ENCODE measurements at regions of chr3 and their contacts with region 1.

Region 1: DNA sequence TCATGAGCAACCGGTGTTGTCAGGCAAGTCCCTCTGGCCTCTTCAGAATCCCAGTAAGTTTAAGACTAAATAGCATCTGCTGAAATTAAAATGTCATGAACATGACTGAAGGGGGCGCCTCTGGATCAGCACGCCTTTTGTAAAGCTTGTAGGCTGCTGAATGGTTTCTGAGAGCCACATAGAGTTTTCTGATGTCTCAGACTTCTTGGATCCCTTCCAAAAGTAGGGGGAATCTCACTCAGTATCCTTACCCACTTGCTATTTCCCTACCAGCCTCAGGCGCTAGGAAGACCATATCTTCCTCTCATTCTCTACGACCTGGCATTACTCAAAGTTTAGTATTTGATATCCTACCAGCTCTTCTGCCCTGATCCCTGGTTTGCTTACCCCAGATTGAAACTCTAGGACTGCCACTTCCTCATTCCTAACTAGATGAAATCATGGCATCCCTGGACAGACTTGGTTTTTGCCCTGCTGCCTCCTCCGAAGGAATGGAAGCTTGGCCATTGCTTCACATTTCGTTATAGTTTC is 62.7 kb upstream of the CD47 start:
- DNase-seq: peak; percentile 50 to 51
- H3K4me3 ChIP-seq: no peak overlapping the region
- H3K4me3 Mint-ChIP-seq: no peak overlapping the region
- H3K27ac Mint-ChIP-seq: no peak overlapping the region
- H3K4me1 ChIP-seq: no peaks in the 10 kb centered on the region
- H3K4me1 Mint-ChIP-seq: peaks cover 6% of the 10 kb centered on the region
- H3K27me3 ChIP-seq: no peaks in the 10 kb centered on the region
- H3K27me3 Mint-ChIP-seq: no peaks in the 10 kb centered on the region
- CTCF ChIP-seq: peak; percentile 42 to 46

Region 2: GRCh38 chr3:108322352-108322751 is 168.8 kb after region 1 on chr3:
- CTCF ChIA-PET with region 1: interaction called, 3 read pairs
- POLR2A ChIA-PET with region 1: no interaction called
- intact Hi-C with region 1: loop called (anchors 1 kb)
- DNase-seq: no peak
- H3K4me3 ChIP-seq: no peak overlapping the region
- H3K4me3 Mint-ChIP-seq: no peak overlapping the region
- H3K27ac Mint-ChIP-seq: no peak overlapping the region
- H3K4me1 ChIP-seq: peaks cover 14% of the 10 kb centered on the region
- H3K4me1 Mint-ChIP-seq: peaks cover 12% of the 10 kb centered on the region
- H3K27me3 ChIP-seq: no peaks in the 10 kb centered on the region
- H3K27me3 Mint-ChIP-seq: no peaks in the 10 kb centered on the region
- CTCF ChIP-seq: peak in 1 of 2 experiments; percentile 19

Region 3: GRCh38 chr3:108406661-108407206 is 253.2 kb after region 1 on chr3:
- CTCF ChIA-PET with region 1: interaction called, 3 read pairs
- POLR2A ChIA-PET with region 1: no interaction called
- intact Hi-C with region 1: loop called (anchors 1 kb)
- DNase-seq: peak in 1 of 2 experiments; percentile 25
- H3K4me3 ChIP-seq: no peak overlapping the region
- H3K4me3 Mint-ChIP-seq: no peak overlapping the region
- H3K27ac Mint-ChIP-seq: no peak overlapping the region
- H3K4me1 ChIP-seq: no peaks in the 10 kb centered on the region
- H3K4me1 Mint-ChIP-seq: peaks cover 9% of the 10 kb centered on the region
- H3K27me3 ChIP-seq: no peaks in the 10 kb centered on the region
- H3K27me3 Mint-ChIP-seq: no peaks in the 10 kb centered on the region
- CTCF ChIP-seq: peak; percentile 36 to 50

Region 4: GRCh38 chr3:108437440-108437839 is 283.9 kb after region 1 on chr3:
- CTCF ChIA-PET with region 1: interaction called, 5 read pairs
- POLR2A ChIA-PET with region 1: no interaction called
- intact Hi-C with region 1: loop called (anchors 1 kb)
- DNase-seq: peak in 1 of 2 experiments; percentile 9
- H3K4me3 ChIP-seq: no peak overlapping the region
- H3K4me3 Mint-ChIP-seq: no peak overlapping the region
- H3K27ac Mint-ChIP-seq: no peak overlapping the region
- H3K4me1 ChIP-seq: no peaks in the 10 kb centered on the region
- H3K4me1 Mint-ChIP-seq: no peaks in the 10 kb centered on the region
- H3K27me3 ChIP-seq: no peaks in the 10 kb centered on the region
- H3K27me3 Mint-ChIP-seq: no peaks in the 10 kb centered on the region
- CTCF ChIP-seq: no peak

Region 5: DNA sequence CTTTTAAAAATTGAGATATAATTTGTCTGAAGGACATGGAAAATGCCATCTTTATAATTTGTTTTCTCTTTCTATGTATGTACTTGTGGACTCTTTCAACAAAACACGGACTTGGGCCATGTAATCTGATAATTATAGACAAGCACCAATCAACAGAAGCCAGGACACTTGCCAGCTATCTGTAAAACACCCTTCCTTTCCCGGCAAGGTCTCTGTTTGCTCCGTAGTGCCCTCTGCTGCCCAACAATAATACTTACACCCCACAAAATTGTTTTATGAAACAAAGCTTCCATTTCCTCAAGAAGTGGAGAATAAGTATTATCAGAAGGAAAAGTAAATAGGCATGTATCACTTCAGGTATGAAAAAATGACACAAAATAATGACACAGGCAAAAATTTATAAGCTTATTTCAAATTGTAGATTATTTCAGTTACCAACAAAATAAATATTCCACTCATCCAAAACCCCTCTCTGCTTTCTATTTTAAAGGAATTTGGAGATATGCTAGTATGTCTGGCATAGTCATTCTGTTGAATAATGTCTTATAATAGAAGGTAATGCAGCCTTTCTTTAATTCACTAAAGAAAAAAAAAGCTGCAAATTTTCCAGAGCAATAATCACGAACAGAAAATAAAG is 324.1 kb after region 1 on chr3:
- CTCF ChIA-PET with region 1: interaction called, 7 read pairs
- POLR2A ChIA-PET with region 1: no interaction called
- intact Hi-C with region 1: loop called (anchors 1 kb)
- DNase-seq: peak; percentile 53 to 57
- H3K4me3 ChIP-seq: no peak overlapping the region
- H3K4me3 Mint-ChIP-seq: no peak overlapping the region
- H3K27ac Mint-ChIP-seq: no peak overlapping the region
- H3K4me1 ChIP-seq: no peaks in the 10 kb centered on the region
- H3K4me1 Mint-ChIP-seq: no peaks in the 10 kb centered on the region
- H3K27me3 ChIP-seq: no peaks in the 10 kb centered on the region
- H3K27me3 Mint-ChIP-seq: peaks cover 2% of the 10 kb centered on the region
- CTCF ChIP-seq: peak; percentile 59 to 70

Measured in Caco-2 (cell line).